ENCODE measurements at regions of chr17 and their contacts with region 1.

Region 1: GRCh38 chr17:77734341-77735080 is 224.0 kb upstream of the TNRC6C start:
- DNase-seq: peak; percentile 94 to 95
- ATAC-seq: peak; percentile 72 to 91 (median 84)
- H3K4me3 ChIP-seq: peak overlapping the region in 6 of 10 donors; percentile 8 to 29 (median 18)
- H3K27ac ChIP-seq: peak overlapping the region; percentile 74 to 96 (median 86)
- H3K4me1 ChIP-seq: peaks cover 27 to 56% (median 46%) of the 10 kb centered on the region in 9 donors
- H3K27me3 ChIP-seq: peaks cover 0 to 9% (median 0%) of the 10 kb centered on the region in 7 donors
- CTCF ChIP-seq: peak in 6 of 9 donors; percentile 6 to 51 (median 28)

Region 2: GRCh38 chr17:77602062-77602746 is 132.3 kb before region 1 on chr17:
- intact Hi-C with region 1: loop called in 5 of 10 experiments (anchors 2 to 5 kb)
- DNase-seq: peak; percentile 68 to 80
- ATAC-seq: peak; percentile 91 to 96 (median 94)
- H3K4me3 ChIP-seq: no peak overlapping the region
- H3K27ac ChIP-seq: peak overlapping the region; percentile 83 to 97 (median 90)
- H3K4me1 ChIP-seq: peaks cover 18 to 36% (median 31%) of the 10 kb centered on the region in 9 donors
- H3K27me3 ChIP-seq: no peaks in the 10 kb centered on the region
- CTCF ChIP-seq: no peak

Region 3: GRCh38 chr17:77677211-77677610 is 57.3 kb before region 1 on chr17:
- intact Hi-C with region 1: loop called in 3 of 10 experiments (anchors 5 kb)
- DNase-seq: peak; percentile 36 to 40
- ATAC-seq: peak in 5 of 8 donors; percentile 31 to 65 (median 62)
- H3K4me3 ChIP-seq: peak overlapping the region in 2 of 10 donors; percentile 14 to 23
- H3K27ac ChIP-seq: peak overlapping the region in 7 of 10 donors; percentile 20 to 75 (median 50)
- H3K4me1 ChIP-seq: peaks cover 11 to 47% (median 27%) of the 10 kb centered on the region in 9 donors
- H3K27me3 ChIP-seq: no peaks in the 10 kb centered on the region
- CTCF ChIP-seq: no peak

Region 4: GRCh38 chr17:77696721-77697460 is 37.6 kb before region 1 on chr17:
- intact Hi-C with region 1: no loop called
- DNase-seq: no peak
- ATAC-seq: peak in 5 of 8 donors; percentile 13 to 43 (median 27)
- H3K4me3 ChIP-seq: peak overlapping the region in 1 of 10 donors; percentile 14
- H3K27ac ChIP-seq: no peak overlapping the region
- H3K4me1 ChIP-seq: peaks cover 0 to 17% (median 0%) of the 10 kb centered on the region in 9 donors
- H3K27me3 ChIP-seq: peaks cover 0 to 32% (median 20%) of the 10 kb centered on the region in 7 donors
- CTCF ChIP-seq: no peak

Region 5: GRCh38 chr17:77810536-77810935 is 76.0 kb after region 1 on chr17:
- intact Hi-C with region 1: loop called in 1 of 10 experiments (anchors 5 kb)
- DNase-seq: peak; percentile 48 to 53
- ATAC-seq: peak; percentile 84 to 96 (median 91)
- H3K4me3 ChIP-seq: no peak overlapping the region
- H3K27ac ChIP-seq: peak overlapping the region in 8 of 10 donors; percentile 33 to 74 (median 52)
- H3K4me1 ChIP-seq: peaks cover 10 to 26% (median 21%) of the 10 kb centered on the region in 9 donors
- H3K27me3 ChIP-seq: no peaks in the 10 kb centered on the region
- CTCF ChIP-seq: no peak

Region 6: DNA sequence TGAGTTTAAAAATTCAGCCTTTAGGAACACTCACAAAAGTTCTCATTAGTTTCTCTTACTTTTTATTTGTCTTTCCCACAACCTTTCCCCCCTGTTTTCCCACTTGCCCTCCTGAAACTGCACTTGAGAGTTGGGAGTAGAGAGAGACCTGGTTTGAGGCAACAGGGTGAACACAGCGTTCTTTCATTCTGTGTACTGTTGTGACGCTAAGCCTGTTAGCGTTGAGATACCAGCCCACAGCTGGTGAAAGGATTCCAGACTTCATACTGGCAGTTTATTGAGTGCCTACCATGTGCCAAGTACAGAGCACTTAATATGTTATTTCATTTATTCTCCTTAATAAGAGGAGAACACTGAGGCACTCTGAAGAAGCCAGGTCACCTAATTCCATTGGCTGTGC is 234.3 kb after region 1 on chr17:
- intact Hi-C with region 1: no loop called
- DNase-seq: no peak
- ATAC-seq: peak in 7 of 8 donors; percentile 52 to 97 (median 85)
- H3K4me3 ChIP-seq: no peak overlapping the region
- H3K27ac ChIP-seq: peak overlapping the region in 7 of 10 donors; percentile 0 to 57 (median 37)
- H3K4me1 ChIP-seq: peaks cover 2 to 75% (median 58%) of the 10 kb centered on the region in 9 donors
- H3K27me3 ChIP-seq: no peaks in the 10 kb centered on the region
- CTCF ChIP-seq: no peak

Measured in heart right ventricle (tissue), 16 donors.